Motor neuron (in vitro differentiated cells): ENCODE measurements at regions of chr2 and their contacts with region 1.

Region 1: DNA sequence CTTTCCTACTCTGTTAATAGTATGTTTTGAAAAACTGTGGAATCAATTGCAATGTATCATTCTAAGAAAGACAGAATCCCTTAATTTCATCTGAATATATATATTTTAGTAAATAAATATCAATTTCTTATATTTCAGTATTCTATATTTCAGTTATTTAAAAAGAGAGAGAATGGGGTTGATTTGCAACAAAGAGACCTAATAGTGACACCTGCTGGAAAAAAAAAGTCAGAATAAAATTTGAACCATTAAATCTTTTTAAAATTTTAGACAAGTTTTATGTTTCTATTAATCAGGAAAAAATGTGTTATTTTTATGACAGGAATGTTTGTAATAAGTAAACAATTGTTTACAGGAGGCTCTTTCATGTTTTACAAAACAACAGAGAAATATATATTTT is 20.7 kb upstream of the CCNT2 start:
- ATAC-seq: no peak
- H3K4me3 ChIP-seq: no peak overlapping the region
- H3K27ac ChIP-seq: no peak overlapping the region
- H3K4me1 ChIP-seq: no peaks in the 10 kb centered on the region

Region 2: DNA sequence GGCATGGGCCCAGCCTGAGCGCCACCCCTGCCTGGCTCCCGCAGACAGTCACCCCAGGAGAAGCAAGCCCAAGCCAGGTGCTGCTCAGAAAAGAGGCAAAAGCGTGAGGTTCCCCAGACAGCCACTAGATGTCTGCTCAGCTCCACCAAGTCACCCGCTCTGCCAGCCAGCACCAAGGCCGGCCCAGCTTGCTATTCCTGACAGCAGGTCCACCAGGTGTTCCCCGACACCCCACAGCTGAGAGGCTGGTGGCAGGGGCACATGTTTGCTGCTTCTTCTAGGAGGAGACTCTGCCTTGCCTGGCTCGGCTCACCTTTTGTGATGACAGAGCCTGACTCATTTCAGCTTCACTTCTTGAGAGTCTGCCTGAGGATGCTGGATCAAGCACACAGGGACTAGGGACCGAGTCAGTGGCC is 437.3 kb before region 1 on chr2:
- in situ Hi-C with region 1: loop called in 8 of 9 experiments (anchors 10 to 25 kb)
- ATAC-seq: peak; percentile 59 to 92 (median 84)
- H3K4me3 ChIP-seq: no peak overlapping the region
- H3K27ac ChIP-seq: no peak overlapping the region
- H3K4me1 ChIP-seq: peaks cover 8 to 17% of the 10 kb centered on the region in 2 donors

Region 3: DNA sequence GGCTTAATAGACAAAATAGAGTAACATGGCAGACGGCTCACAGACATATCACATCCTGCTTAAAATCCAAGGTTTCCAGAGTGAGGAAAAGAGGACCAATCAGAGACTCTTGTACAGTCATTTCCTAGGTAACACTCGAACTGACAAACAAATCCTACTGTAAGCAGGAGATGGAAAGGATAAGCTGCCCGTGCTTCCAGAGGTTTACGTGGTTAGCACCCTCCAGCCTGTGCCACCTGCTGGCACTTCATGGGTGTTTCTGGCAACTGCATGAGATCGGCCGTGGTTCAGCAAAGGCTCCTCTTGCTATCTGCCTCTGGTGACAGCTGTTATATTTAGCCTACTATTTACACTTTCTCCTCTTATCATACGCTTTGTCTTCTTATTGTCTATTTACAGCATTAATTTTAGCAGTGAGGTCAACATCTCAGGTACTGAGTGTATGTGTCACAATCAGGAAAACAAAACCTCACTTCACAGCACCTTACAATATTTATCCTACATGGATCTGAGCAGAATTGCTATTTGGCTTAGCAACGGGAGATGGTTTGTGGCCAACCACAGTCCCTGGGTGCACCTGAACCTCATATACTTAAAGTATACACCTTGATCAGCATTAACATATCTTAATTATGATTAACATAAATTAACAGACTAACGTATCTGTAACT is 406.0 kb before region 1 on chr2:
- in situ Hi-C with region 1: loop called in 1 of 9 experiments (anchors 25 kb)
- ATAC-seq: peak in 2 of 8 experiments; percentile 21 to 81
- H3K4me3 ChIP-seq: no peak overlapping the region
- H3K27ac ChIP-seq: no peak overlapping the region
- H3K4me1 ChIP-seq: no peaks in the 10 kb centered on the region